ENCODE measurements at regions of chr2 and their contacts with region 1.

Region 1: DNA sequence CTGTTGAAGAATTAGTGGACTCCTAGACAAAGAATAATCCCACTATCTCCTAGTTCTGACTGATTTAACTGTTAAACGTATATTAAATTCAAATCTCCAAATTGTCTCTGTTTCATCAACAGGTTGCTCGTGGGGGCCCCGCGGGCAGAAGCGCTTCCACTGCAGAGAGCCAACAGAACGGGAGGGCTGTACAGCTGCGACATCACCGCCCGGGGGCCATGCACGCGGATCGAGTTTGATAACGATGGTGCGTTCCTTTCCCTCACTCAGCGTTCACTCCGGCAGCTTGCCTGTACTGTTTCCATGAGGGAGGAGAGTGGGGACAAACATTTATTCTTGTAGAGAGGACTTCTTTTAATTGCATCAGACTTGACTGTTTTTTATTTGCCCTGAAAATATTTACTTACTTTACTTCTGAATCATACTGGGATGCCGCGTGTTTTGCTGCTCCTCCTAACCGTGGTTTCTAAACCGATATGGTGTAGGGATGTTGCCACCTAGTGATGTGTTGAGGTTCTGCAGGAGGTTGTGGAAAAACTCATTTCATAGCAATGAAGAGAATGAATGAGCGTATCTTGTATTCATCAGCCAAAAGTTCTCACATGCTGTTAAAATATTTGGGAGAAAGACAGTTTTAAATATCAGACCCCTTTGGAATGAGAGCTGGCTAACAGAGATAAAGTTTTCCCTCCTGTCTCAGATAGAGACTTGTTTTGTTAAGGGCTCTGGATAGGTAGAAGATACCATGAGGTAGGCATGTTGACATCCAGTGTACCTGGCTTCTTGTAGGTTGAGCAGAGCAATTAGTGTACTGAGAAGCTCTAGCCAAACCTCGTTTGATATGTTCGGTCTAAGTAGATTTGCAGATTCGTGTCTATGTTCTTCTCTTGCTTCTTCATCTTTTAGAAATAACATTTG is 38.3 kb downstream of the ITGA6 start:
- DNase-seq: peak; percentile 91
- H3K4me3 Mint-ChIP-seq: peak overlapping the region; percentile 53
- H3K27ac Mint-ChIP-seq: peak overlapping the region; percentile 75
- H3K4me1 Mint-ChIP-seq: peaks cover 74% of the 10 kb centered on the region
- H3K27me3 Mint-ChIP-seq: no peaks in the 10 kb centered on the region

Region 2: DNA sequence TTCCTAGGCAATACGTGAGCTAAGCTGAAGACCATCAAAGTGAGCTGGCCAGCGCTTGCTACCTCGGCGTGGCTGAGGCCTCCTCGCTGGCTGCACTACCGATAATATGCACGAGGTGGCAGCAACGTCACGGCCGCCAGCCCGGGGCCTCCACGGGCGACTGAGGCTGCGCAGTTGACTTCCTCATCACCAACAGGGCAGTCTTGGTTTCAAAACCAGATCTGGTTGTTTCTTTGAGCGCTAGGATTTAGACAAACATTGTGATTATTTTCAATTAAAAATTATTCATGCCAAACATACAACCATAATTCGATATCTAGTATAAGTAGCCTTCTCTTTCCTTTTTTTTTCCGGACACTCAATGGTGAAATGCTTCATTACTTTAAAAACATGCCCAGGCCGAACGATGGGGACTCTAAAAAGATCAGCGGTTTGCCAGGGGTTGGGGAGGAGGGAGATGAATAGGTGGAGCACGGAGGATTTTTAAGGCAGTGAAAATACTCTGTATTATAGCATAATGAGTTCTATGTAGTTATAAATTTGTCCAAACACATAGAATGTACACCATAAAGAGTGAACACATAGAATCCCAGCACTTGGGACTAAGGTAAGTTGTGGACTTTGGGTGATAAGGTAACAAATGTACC is 891.4 kb before region 1 on chr2:
- CTCF ChIA-PET with region 1: no interaction called
- intact Hi-C with region 1: loop called (anchors 1 kb)
- DNase-seq: peak; percentile 86
- H3K4me3 Mint-ChIP-seq: no peak overlapping the region
- H3K27ac Mint-ChIP-seq: peak overlapping the region; percentile 53
- H3K4me1 Mint-ChIP-seq: peaks cover 5% of the 10 kb centered on the region
- H3K27me3 Mint-ChIP-seq: no peaks in the 10 kb centered on the region

Region 3: GRCh38 chr2:171811245-171811628 is 654.4 kb before region 1 on chr2:
- CTCF ChIA-PET with region 1: no interaction called
- intact Hi-C with region 1: loop called (anchors 5 kb)
- DNase-seq: no peak
- H3K4me3 Mint-ChIP-seq: no peak overlapping the region
- H3K27ac Mint-ChIP-seq: no peak overlapping the region
- H3K4me1 Mint-ChIP-seq: no peaks in the 10 kb centered on the region
- H3K27me3 Mint-ChIP-seq: no peaks in the 10 kb centered on the region

Region 4: DNA sequence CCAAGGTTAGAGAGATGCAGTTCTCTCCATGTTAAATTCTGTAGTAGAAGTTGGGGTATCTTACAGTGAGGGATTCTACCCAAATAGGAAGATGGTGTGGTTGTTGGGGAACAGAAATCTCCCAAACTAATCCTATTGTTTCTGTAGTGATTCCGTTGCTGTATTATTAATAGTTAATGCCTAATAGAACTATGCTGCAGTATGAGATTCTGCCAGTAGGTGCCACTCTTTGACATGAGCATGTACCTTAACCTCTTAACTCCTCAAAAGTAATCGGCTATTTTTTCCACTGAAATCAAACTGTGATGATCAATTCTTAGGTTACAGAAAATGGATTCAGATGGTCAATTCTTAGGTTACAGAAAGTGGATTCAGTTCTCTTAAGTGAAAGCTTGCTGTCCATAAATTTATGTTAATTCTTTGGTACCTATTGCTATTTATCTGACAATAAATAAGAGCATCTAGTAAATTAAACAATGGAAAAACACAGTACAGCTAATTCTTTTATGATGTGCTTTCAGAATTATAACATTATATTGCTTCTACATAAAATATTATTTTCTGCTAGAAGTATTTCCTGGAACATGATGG is 265.1 kb before region 1 on chr2:
- CTCF ChIA-PET with region 1: interaction called, 11 read pairs
- intact Hi-C with region 1: loop called (anchors 1 kb)
- DNase-seq: peak; percentile 44
- H3K4me3 Mint-ChIP-seq: no peak overlapping the region
- H3K27ac Mint-ChIP-seq: no peak overlapping the region
- H3K4me1 Mint-ChIP-seq: peaks cover 14% of the 10 kb centered on the region
- H3K27me3 Mint-ChIP-seq: peaks cover 3% of the 10 kb centered on the region

Region 5: DNA sequence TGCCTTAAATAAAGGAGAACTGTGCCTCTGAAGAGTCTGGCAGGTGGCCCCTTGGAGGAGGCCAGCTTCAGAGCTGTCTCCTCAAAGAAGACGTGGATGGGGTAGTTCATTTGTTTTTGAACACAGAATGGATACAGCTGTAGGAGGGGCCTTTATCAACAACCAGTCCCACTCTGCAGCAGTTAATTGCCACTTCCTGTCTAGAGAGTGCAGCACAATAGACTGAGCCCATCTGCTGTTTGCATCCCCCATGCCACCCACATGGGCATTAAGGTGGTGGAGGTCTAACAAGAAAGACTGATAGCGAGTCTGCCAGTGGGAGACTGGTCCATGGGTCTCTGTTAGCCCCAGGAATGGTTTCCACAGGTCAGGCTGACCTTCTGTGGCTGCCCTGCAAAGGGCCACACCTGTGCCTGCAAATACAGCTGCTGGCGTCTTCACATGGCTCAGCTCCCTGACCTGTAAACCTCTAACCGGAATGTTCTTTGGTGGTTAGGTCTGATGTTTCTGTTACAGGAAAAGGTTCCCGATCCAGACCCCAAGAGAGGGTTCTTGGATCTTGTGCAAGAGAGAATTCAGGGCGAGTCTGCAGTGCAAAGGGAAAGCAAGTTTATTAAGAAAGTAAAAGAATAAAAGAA is 191.6 kb before region 1 on chr2:
- CTCF ChIA-PET with region 1: interaction called, 19 read pairs
- intact Hi-C with region 1: no loop called
- DNase-seq: no peak
- H3K4me3 Mint-ChIP-seq: no peak overlapping the region
- H3K27ac Mint-ChIP-seq: no peak overlapping the region
- H3K4me1 Mint-ChIP-seq: peaks cover 12% of the 10 kb centered on the region
- H3K27me3 Mint-ChIP-seq: no peaks in the 10 kb centered on the region

Region 6: GRCh38 chr2:172442072-172442895 is 23.4 kb before region 1 on chr2:
- CTCF ChIA-PET with region 1: interaction called, 145 read pairs
- intact Hi-C with region 1: loop called (anchors 1 kb)
- DNase-seq: peak; percentile 87
- H3K4me3 Mint-ChIP-seq: peak overlapping the region; percentile 58
- H3K27ac Mint-ChIP-seq: no peak overlapping the region
- H3K4me1 Mint-ChIP-seq: peaks cover 69% of the 10 kb centered on the region
- H3K27me3 Mint-ChIP-seq: no peaks in the 10 kb centered on the region

Region 7: DNA sequence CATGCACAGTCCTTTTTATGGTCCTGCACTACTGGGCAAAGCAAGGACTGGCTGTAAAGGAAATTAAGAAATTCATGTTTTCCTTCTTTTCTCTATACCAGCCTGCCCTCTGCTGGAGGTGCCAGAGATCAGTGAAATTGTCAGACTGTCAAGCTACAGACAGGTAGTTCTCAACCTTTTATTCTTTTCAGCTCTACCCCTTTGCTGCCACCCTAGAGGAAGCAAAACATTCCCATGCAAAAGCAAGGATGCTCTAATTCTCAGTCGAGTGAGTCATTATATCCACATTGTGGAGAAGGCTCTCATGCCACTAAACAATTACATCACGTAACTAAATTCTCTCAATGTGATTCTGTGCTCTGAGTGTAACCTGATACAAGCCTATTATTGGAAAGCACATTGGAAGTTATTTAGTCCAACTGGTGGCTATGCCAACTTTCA is 244.9 kb after region 1 on chr2:
- CTCF ChIA-PET with region 1: interaction called, 6 read pairs
- intact Hi-C with region 1: loop called (anchors 1 kb)
- DNase-seq: peak; percentile 69
- H3K4me3 Mint-ChIP-seq: no peak overlapping the region
- H3K27ac Mint-ChIP-seq: no peak overlapping the region
- H3K4me1 Mint-ChIP-seq: no peaks in the 10 kb centered on the region
- H3K27me3 Mint-ChIP-seq: no peaks in the 10 kb centered on the region